ENCODE measurements at regions of chr11 and their contacts with region 1.

Region 1: DNA sequence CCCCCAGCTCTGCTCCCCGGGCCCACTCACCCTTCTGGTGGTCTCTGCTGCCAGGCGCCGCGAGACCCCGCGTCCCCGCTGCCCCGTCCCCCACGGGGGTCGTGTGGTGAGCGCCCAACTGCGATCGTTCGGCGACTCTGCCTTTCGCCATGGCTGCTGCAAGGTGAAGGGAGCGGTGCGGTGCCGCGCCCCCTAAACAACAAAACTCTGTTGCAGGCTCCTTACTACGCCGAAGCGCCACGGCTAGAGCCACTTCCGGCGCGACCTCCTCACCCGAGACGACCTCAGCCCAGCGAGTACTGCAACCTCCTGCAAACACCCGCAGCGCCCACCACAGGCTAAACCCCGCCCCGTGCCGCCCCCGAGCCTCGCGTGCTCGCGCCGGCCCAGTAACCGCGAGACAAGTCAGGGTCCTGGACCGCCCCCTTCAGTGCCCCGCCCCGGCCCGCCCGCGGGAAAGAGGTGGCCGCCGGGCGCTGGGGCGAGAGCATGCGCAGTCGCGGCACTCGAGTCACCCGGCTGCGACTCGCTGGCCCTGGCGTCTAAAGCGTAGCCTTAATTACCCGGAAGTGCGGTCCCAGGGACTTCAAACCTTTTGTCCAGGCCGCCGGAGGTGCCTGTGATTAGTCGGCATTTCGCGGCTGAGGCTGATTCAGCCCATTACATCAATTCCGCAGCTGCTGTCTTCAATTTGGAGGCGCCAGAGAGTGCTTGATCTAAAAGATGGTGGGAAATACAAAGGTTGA is at the start of gene TMEM41B:
- DNase-seq: peak; percentile 100
- ATAC-seq: peak; percentile 97
- H3K4me3 Mint-ChIP-seq: peak within 1 kb of the TSS; percentile 97
- H3K27ac Mint-ChIP-seq: peak within 1 kb of the TSS; percentile 95
- H3K4me1 Mint-ChIP-seq: peaks cover 29% of the 10 kb centered on the region
- H3K27me3 Mint-ChIP-seq: peaks cover 19% of the 10 kb centered on the region
- total RNA-seq, gene TMEM41B: 32.7 to 32.8 TPM

Region 2: GRCh38 chr11:9060700-9061111 is 253.8 kb before region 1 on chr11:
- CTCF ChIA-PET with region 1: no interaction called
- POLR2A ChIA-PET with region 1: no interaction called
- DNase-seq: peak; percentile 60
- ATAC-seq: peak; percentile 82
- H3K4me3 Mint-ChIP-seq: no peak overlapping the region
- H3K27ac Mint-ChIP-seq: peak overlapping the region; percentile 14
- H3K4me1 Mint-ChIP-seq: peaks cover 13% of the 10 kb centered on the region
- H3K27me3 Mint-ChIP-seq: peaks cover 2% of the 10 kb centered on the region

Region 3: GRCh38 chr11:9265211-9266131 is 49.0 kb before region 1 on chr11 and contains the start of gene DENND5A:
- CTCF ChIA-PET with region 1: interaction called, 4 read pairs
- POLR2A ChIA-PET with region 1: interaction called, 16 read pairs
- DNase-seq: peak; percentile 75
- ATAC-seq: peak; percentile 66
- H3K4me3 Mint-ChIP-seq: peak within 1 kb of the TSS; percentile 94
- H3K27ac Mint-ChIP-seq: peak within 1 kb of the TSS; percentile 92
- H3K4me1 Mint-ChIP-seq: peaks cover 42% of the 10 kb centered on the region
- H3K27me3 Mint-ChIP-seq: peaks cover 19% of the 10 kb centered on the region
- total RNA-seq, gene DENND5A: 78.5 to 81.1 TPM

Region 4: DNA sequence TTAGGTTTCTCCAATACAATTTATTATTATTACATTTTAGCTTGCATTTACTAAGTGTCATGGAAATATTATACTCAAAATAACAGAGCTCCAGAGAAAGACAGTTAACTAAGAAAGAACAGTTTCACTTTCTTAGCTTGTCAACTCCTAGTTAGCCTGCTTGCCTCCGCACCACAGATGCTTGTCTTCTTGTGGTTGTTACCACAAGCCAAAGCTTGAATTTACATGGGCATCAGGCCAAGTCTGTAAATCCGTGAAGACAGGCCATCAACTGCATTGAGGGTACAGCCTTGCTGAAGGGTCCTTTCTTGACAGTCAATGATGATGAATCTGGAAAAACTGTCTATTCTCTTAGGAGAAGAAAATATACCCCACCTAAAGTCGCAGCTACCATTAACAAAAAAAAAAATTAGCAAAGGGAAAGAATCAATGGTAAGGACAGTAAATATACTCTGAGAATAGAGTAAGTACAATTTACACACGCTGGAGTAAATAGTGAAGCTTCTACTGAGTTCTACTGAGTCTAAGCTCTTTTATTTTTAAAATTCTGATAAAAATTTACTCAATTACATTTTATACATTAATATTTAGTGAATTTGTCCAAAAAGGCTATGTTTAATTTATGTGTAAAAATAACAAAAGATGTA is 33.7 kb before region 1 on chr11:
- CTCF ChIA-PET with region 1: interaction called, 9 read pairs
- POLR2A ChIA-PET with region 1: interaction called, 12 read pairs
- DNase-seq: peak; percentile 83
- ATAC-seq: peak; percentile 95
- H3K4me3 Mint-ChIP-seq: peak overlapping the region; percentile 61
- H3K27ac Mint-ChIP-seq: peak overlapping the region; percentile 72
- H3K4me1 Mint-ChIP-seq: peaks cover 20% of the 10 kb centered on the region
- H3K27me3 Mint-ChIP-seq: no peaks in the 10 kb centered on the region

Region 5: GRCh38 chr11:9363954-9364912 is 49.8 kb after region 1 on chr11:
- CTCF ChIA-PET with region 1: no interaction called
- POLR2A ChIA-PET with region 1: interaction called, 11 read pairs
- DNase-seq: peak; percentile 80
- ATAC-seq: peak; percentile 94
- H3K4me3 Mint-ChIP-seq: peak overlapping the region; percentile 75
- H3K27ac Mint-ChIP-seq: peak overlapping the region; percentile 90
- H3K4me1 Mint-ChIP-seq: peaks cover 34% of the 10 kb centered on the region
- H3K27me3 Mint-ChIP-seq: peaks cover 2% of the 10 kb centered on the region

Measured in activated CD8-positive, alpha-beta T cell treated with anti-CD3 and anti-CD28 coated beads, Interleukin-2, amount 10 ng/mL, durations not matched to agents 7 days and 5 days (primary cell).